Posterior cingulate gyrus (tissue), 11 donors: ENCODE measurements at regions of chr7 and their contacts with region 1.

Region 1: GRCh38 chr7:145557805-145558204 is 558.8 kb upstream of the CNTNAP2 start:
- DNase-seq: peak in 3 of 10 donors; percentile 28 to 67 (median 48)

Region 2: GRCh38 chr7:145497911-145498525 is 59.8 kb before region 1 on chr7:
- intact Hi-C with region 1: loop called (anchors 10 kb)
- DNase-seq: no peak